Activated T-helper 1 cell treated with anti-CD3 and anti-CD28 coated beads, Interleukin-12 subunit alpha, Interleukin-12 subunit beta, Interleukin-2, Interleukin-4 antibody, amounts not matched to agents 30 ng/mL and 10 ng/mL and 1 ng/mL, durations not matched to agents 14 hours and 24 hours and 36 hours (primary cell): ENCODE measurements at regions of chr13 and their contacts with region 1.

Region 1: GRCh38 chr13:25037057-25037813 is 58.7 kb upstream of the PABPC3 start:
- DNase-seq: peak; percentile 30
- H3K4me3 Mint-ChIP-seq: no peak overlapping the region
- H3K27ac Mint-ChIP-seq: no peak overlapping the region
- H3K4me1 Mint-ChIP-seq: peaks cover 4% of the 10 kb centered on the region
- H3K27me3 Mint-ChIP-seq: peaks cover 19% of the 10 kb centered on the region

Region 2: DNA sequence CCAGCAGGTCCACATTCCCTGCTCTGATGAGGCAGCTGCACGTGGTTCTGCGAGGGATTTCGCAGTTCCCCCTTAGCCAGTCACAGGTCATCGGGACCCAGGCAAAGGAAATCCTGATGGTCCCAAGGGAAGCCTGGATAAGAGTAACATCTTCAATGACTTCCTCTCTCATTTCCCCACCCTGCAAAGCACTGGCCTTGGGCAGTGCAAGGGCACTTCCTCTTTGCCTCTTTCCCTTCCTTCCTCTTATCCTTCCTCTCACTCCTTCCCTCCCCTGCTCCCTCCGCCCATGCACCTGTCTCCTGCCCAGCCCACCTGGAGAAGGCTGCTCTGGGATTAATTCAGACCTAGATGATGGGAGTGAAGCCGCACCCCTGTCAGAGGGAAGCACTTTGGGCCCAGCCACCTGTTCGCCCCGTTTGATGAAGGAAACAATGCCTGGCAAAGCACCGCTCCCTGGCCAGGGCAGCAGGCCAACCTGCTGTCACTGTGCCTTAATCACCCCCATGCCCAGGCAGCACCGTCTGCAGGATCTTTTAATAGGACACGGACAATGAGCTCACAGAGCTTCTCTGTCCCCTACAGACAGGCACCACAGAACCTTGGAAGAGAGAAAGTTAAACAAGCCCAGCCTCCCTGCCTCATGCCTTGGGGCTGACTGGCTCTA is 54.8 kb before region 1 on chr13:
- intact Hi-C with region 1: no loop called
- DNase-seq: no peak
- H3K4me3 Mint-ChIP-seq: no peak overlapping the region
- H3K27ac Mint-ChIP-seq: no peak overlapping the region
- H3K4me1 Mint-ChIP-seq: no peaks in the 10 kb centered on the region
- H3K27me3 Mint-ChIP-seq: peaks cover 21% of the 10 kb centered on the region

Region 3: GRCh38 chr13:25114220-25114619 is 77.0 kb after region 1 on chr13:
- intact Hi-C with region 1: loop called (anchors 1 kb)
- DNase-seq: peak; percentile 42
- H3K4me3 Mint-ChIP-seq: no peak overlapping the region
- H3K27ac Mint-ChIP-seq: no peak overlapping the region
- H3K4me1 Mint-ChIP-seq: no peaks in the 10 kb centered on the region
- H3K27me3 Mint-ChIP-seq: peaks cover 32% of the 10 kb centered on the region